ENCODE measurements at regions of chr1 and their contacts with region 1.

Region 1: DNA sequence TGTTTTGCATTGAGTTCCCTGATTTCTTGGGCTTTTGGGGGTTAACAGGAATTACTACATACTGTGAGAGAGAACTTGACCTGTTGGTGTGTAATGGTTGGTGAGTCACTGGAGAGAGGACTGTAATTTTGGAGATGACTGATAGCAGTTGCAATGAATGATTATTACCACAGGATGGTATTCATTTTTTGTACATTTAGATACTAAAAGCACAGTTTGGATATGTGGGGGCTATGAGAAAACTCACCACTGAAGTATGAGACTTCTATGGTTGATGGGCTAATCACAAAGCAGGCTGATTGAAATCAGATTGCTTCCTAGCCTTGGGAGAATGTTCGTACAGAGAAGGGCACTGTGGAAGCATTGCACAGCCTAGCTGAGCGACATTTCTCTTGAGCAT is 1571.3 kb upstream of the PRMT6 start:
- DNase-seq: no peak
- ATAC-seq: no peak
- H3K4me3 ChIP-seq: no peak overlapping the region
- H3K4me3 Mint-ChIP-seq: no peak overlapping the region
- H3K27ac ChIP-seq: no peak overlapping the region
- H3K27ac Mint-ChIP-seq: no peak overlapping the region
- H3K4me1 ChIP-seq: no peaks in the 10 kb centered on the region
- H3K4me1 Mint-ChIP-seq: no peaks in the 10 kb centered on the region
- H3K27me3 ChIP-seq: no peaks in the 10 kb centered on the region
- H3K27me3 Mint-ChIP-seq: no peaks in the 10 kb centered on the region
- CTCF ChIP-seq: no peak

Region 2: DNA sequence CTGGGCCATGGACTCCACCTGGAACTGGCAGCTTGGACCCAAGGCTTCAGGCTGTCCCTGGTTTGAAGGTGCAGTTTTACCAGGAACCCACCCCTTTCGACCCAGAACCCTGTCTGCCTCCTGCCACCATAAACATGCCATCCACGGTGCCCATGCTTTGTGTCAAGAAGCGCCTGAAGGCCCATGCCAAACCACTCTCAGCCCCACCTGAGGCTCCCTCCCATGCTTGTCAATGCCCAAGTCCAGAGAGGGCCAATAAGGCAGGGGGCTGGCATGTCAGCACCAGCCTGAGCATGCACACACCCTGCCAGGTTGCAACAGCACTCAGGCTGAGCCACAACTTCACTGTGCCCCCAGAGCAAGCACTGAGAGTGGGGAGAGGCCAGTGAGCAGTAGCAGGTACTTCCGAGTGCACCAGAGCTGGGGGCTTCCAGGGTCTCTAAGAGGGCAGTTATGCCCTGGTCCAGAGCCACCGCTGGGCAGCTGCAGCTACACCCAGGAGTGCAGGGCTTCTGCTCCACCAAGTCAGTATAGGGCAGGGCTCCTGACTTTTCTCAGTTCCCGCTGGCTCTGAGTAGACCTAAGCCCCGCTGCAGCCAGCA is 479.5 kb before region 1 on chr1:
- CTCF ChIA-PET with region 1: no interaction called
- POLR2A ChIA-PET with region 1: no interaction called
- intact Hi-C with region 1: no loop called
- DNase-seq: no peak
- ATAC-seq: no peak
- H3K4me3 ChIP-seq: no peak overlapping the region
- H3K4me3 Mint-ChIP-seq: no peak overlapping the region
- H3K27ac ChIP-seq: no peak overlapping the region
- H3K27ac Mint-ChIP-seq: no peak overlapping the region
- H3K4me1 ChIP-seq: no peaks in the 10 kb centered on the region
- H3K4me1 Mint-ChIP-seq: no peaks in the 10 kb centered on the region
- H3K27me3 ChIP-seq: no peaks in the 10 kb centered on the region
- H3K27me3 Mint-ChIP-seq: no peaks in the 10 kb centered on the region
- CTCF ChIP-seq: no peak

Region 3: DNA sequence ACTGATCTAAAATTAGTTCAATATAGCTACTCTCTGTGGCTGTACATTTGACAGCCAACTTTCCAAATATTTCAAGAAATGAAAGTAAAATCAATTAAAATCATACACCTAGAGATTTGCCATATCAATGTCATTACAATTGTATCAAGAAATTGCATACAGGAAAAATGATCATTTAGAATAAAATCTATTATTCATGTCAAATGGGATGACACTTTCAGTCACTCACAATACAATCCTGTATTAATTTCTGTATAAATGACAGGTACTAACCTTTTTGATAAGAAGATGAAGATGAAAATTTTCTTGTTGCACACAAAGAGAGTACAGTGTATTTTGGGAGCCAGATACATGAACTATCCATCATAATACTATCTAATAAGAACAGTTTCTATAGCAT is 17.7 kb before region 1 on chr1:
- CTCF ChIA-PET with region 1: no interaction called
- POLR2A ChIA-PET with region 1: no interaction called
- intact Hi-C with region 1: loop called (anchors 1 kb)
- DNase-seq: no peak
- ATAC-seq: no peak
- H3K4me3 ChIP-seq: no peak overlapping the region
- H3K4me3 Mint-ChIP-seq: no peak overlapping the region
- H3K27ac ChIP-seq: no peak overlapping the region
- H3K27ac Mint-ChIP-seq: no peak overlapping the region
- H3K4me1 ChIP-seq: no peaks in the 10 kb centered on the region
- H3K4me1 Mint-ChIP-seq: no peaks in the 10 kb centered on the region
- H3K27me3 ChIP-seq: no peaks in the 10 kb centered on the region
- H3K27me3 Mint-ChIP-seq: no peaks in the 10 kb centered on the region
- CTCF ChIP-seq: no peak